Panc1 (cell line): ENCODE measurements at regions of chr20 and their contacts with region 1.

Region 1: DNA sequence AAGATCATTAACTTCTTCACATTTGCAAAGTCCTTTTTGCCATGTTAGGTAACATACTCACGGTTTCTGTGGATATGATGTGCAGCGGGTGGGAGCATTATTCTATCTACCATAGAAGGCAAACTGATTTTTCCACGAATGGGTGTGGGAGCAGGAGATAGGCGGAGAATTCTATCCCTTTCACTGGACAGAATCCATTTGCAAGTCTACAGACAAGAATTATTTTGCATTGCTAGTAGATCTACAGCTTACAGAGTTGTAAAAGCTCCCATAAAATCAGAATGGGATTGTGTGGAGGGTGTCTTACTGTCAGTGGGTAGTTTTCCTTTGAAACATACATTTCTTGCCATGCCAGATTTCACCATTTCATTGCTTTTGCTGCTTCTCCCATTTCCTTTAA is 22.4 kb upstream of the ZFP64 start:
- DNase-seq: no peak
- ATAC-seq: no peak
- H3K4me3 ChIP-seq: no peak overlapping the region
- H3K27ac ChIP-seq: no peak overlapping the region
- H3K4me1 ChIP-seq: no peaks in the 10 kb centered on the region
- H3K27me3 ChIP-seq: peaks cover 3% of the 10 kb centered on the region
- CTCF ChIP-seq: no peak

Region 2: GRCh38 chr20:52191132-52191915 is 22.7 kb before region 1 on chr20 and contains the start of gene ZFP64:
- CTCF ChIA-PET with region 1: no interaction called
- POLR2A ChIA-PET with region 1: interaction called, 10 read pairs
- in situ Hi-C with region 1: no loop called
- intact Hi-C with region 1: no loop called
- DNase-seq: peak; percentile 39
- ATAC-seq: peak; percentile 95
- H3K4me3 ChIP-seq: peak within 1 kb of the TSS; percentile 87 to 88
- H3K27ac ChIP-seq: peak within 1 kb of the TSS; percentile 89
- H3K4me1 ChIP-seq: peaks cover 12% of the 10 kb centered on the region
- H3K27me3 ChIP-seq: no peaks in the 10 kb centered on the region
- CTCF ChIP-seq: peak; percentile 91
- total RNA-seq, gene ZFP64: 18.4 TPM

Region 3: GRCh38 chr20:52972965-52973819 is 759.2 kb after region 1 on chr20:
- CTCF ChIA-PET with region 1: no interaction called
- POLR2A ChIA-PET with region 1: no interaction called
- in situ Hi-C with region 1: no loop called
- intact Hi-C with region 1: no loop called
- DNase-seq: no peak
- ATAC-seq: peak; percentile 64
- H3K4me3 ChIP-seq: peak overlapping the region; percentile 40 to 52
- H3K27ac ChIP-seq: no peak overlapping the region
- H3K4me1 ChIP-seq: no peaks in the 10 kb centered on the region
- H3K27me3 ChIP-seq: peaks cover 25% of the 10 kb centered on the region
- CTCF ChIP-seq: no peak